ENCODE measurements at regions of chr16 and their contacts with region 1.

Region 1: DNA sequence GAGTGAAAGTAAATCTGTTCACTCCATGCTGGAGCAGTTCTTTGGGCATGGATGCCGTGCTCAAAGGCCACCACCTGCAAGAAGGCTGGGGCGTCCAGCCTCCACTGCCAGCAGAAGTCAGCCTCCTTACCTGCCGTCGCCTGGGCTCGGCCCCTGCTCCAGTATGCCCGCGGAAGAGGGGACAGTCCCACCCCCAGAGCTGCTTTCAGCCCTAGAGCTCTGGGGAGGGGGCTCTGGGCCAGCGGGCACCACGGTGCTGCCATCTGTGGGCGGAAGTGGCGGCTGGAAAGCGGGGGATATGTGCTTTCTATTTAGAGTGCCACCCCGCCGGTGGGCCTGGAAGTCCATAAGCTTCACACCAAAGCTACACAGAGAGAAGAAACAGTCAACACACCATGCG is 75.9 kb downstream of the ARHGAP17 start:
- DNase-seq: no peak
- H3K4me3 ChIP-seq: no peak overlapping the region
- H3K27ac ChIP-seq: no peak overlapping the region
- H3K27me3 ChIP-seq: no peaks in the 10 kb centered on the region
- CTCF ChIP-seq: no peak

Region 2: GRCh38 chr16:25163683-25164082 is 224.4 kb after region 1 on chr16:
- CTCF ChIA-PET with region 1: no interaction called
- POLR2A ChIA-PET with region 1: interaction called, 10 read pairs
- DNase-seq: no peak
- H3K4me3 ChIP-seq: no peak overlapping the region
- H3K27ac ChIP-seq: no peak overlapping the region
- H3K27me3 ChIP-seq: no peaks in the 10 kb centered on the region
- CTCF ChIP-seq: no peak